Panc1 (cell line): ENCODE measurements at regions of chr6 and their contacts with region 1.

Region 1: DNA sequence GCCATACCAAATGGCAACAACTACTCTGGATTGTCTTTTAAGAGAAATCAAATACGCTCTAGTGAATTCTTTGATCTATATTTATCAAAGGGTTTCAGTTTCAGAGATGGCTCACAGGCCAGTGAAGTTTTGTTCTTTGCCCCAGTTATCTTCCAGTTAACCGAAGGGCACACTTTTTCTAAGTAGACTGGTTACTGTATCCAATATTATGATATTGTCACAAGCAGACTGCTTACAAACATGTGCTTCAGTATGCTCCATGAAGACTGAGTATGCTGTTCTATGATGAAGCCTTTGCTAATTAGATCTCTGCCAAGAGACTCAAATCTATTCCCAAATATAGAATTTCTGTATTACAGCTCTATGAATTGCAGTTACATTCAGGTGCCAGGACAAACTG is 181.1 kb downstream of the REV3L start:
- DNase-seq: no peak
- ATAC-seq: no peak
- H3K4me3 ChIP-seq: no peak overlapping the region
- H3K27ac ChIP-seq: no peak overlapping the region
- H3K4me1 ChIP-seq: no peaks in the 10 kb centered on the region
- H3K27me3 ChIP-seq: no peaks in the 10 kb centered on the region
- CTCF ChIP-seq: no peak

Region 2: GRCh38 chr6:110512979-110513378 is 789.0 kb before region 1 on chr6:
- CTCF ChIA-PET with region 1: no interaction called
- POLR2A ChIA-PET with region 1: no interaction called
- in situ Hi-C with region 1: no loop called
- intact Hi-C with region 1: no loop called
- DNase-seq: no peak
- ATAC-seq: no peak
- H3K4me3 ChIP-seq: no peak overlapping the region
- H3K27ac ChIP-seq: no peak overlapping the region
- H3K4me1 ChIP-seq: peaks cover 15% of the 10 kb centered on the region; the same call in 1 of the 2 replicates
- H3K27me3 ChIP-seq: no peaks in the 10 kb centered on the region
- CTCF ChIP-seq: no peak

Region 3: DNA sequence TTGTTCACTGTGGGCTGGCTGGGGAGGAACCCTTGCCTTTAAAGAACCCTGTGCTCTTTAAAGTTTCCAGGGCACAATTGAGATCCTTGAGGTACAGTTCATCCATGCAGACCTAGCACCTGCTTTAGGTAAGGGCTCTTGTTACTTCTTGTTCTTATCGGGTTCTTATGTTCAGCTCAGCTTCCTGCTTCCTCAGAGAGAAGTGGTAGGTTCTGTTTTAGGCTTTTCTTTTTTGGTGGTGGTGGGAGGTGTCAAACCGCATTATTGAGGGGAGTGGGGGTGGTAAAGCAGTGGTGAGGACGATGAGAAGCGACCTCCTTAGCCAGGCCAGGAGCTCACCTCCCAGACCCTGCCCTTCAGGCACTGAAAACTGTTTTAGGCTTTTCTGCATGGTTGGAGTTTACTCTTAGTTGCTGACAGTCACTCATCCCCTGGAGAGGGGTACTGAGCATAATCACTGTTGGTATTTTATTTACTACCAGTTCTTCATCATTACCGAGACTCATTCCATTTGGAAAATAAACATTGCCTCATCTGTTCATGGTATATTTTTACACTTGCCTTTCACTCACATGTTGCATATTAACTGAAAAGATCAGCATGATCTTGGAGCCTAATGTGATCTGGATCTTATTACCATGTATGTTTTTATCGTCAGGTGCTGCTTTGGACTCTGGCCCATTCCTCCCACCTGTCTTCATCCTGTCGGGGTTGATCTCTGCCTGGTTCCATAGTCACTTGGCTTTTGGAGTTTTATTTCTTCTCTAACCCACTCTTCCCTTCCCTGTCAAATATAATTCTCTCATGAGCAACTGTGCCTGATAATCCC is 179.3 kb before region 1 on chr6:
- CTCF ChIA-PET with region 1: no interaction called
- POLR2A ChIA-PET with region 1: no interaction called
- in situ Hi-C with region 1: no loop called
- intact Hi-C with region 1: no loop called
- DNase-seq: no peak
- ATAC-seq: no peak
- H3K4me3 ChIP-seq: no peak overlapping the region
- H3K27ac ChIP-seq: no peak overlapping the region
- H3K4me1 ChIP-seq: no peaks in the 10 kb centered on the region
- H3K27me3 ChIP-seq: peaks cover 33% of the 10 kb centered on the region
- CTCF ChIP-seq: no peak

Region 4: DNA sequence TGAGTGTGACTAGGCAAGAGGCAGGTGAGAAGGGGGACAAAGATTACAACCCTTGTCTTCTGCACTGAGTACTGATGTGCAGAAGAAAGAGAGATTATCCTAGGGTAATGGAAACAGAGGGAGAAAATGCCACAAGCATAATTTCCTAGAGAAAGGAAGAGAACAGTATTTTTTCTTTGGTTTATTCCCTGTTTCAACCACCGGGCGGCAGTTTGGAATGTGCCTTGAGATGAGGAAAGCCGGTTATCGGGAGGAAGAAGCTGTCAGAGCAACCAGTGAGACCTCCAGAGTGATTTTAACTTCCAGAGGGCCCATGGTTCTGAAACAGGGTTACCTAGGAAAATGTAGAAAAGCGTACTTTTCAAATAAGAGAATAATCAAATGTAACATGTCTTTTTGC is 59.7 kb after region 1 on chr6:
- CTCF ChIA-PET with region 1: interaction called, 10 read pairs
- POLR2A ChIA-PET with region 1: no interaction called
- in situ Hi-C with region 1: no loop called
- intact Hi-C with region 1: no loop called
- DNase-seq: peak; percentile 17
- ATAC-seq: peak; percentile 85
- H3K4me3 ChIP-seq: no peak overlapping the region
- H3K27ac ChIP-seq: no peak overlapping the region
- H3K4me1 ChIP-seq: no peaks in the 10 kb centered on the region; the same call in 1 of the 2 replicates
- H3K27me3 ChIP-seq: no peaks in the 10 kb centered on the region
- CTCF ChIP-seq: peak; percentile 78

Region 5: GRCh38 chr6:111565326-111566221 is 263.6 kb after region 1 on chr6:
- CTCF ChIA-PET with region 1: no interaction called
- POLR2A ChIA-PET with region 1: no interaction called
- in situ Hi-C with region 1: no loop called
- intact Hi-C with region 1: no loop called
- DNase-seq: no peak
- ATAC-seq: peak; percentile 70
- H3K4me3 ChIP-seq: no peak overlapping the region
- H3K27ac ChIP-seq: peak overlapping the region; percentile 83
- H3K4me1 ChIP-seq: peaks cover 42% of the 10 kb centered on the region
- H3K27me3 ChIP-seq: no peaks in the 10 kb centered on the region
- CTCF ChIP-seq: no peak; the same call in 1 of the 2 replicates